A549 (cell line): ENCODE measurements at regions of chrX and their contacts with region 1.

Region 1: DNA sequence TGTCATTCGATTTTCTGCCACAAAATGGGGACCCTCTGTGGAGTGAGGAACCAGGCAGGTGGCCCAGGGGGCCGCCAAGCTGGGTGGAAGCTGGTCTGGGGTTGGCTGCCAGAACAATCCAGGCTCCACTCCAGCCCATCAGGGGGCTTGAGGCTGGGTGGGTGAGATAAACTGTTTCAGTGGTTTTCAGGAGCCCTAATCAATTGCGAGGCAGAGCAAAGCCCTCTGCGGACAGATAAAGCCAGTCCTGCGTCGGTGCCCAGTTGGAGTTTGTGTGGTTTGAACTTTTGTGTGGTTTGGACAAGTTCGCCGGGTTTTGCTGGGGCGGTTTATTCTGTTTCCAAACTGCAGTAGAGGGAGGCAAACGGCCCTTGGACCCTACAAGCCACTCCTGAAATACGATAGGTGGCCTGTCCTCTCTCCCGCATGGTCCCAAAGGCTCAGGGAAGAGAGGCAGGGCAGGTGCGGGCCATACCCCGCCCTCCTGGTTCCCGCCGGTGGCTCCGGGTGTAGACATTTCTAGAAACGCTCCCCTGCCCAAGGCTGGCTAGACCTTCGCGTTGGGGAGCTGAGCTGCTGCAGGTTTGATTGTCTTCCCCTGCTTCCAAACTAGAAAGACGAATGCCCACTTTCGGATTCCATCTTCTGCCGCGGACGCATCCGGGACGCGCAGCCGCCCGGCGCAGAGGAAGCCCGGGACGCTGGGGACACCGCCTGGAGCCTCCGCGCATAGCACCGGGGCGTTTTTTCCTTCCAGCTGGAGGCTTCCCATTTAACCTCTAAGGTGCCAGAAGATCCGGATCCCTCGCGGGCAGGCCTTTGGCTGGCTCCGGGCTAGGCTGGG is 169.0 kb upstream of the BCOR start:
- DNase-seq: peak; percentile 65 to 73
- ATAC-seq: peak; percentile 95 to 97
- H3K4me3 ChIP-seq: peak overlapping the region; percentile 64
- H3K27ac ChIP-seq: peak overlapping the region; percentile 89 to 96
- H3K4me1 ChIP-seq: peaks cover 16% of the 10 kb centered on the region
- CTCF ChIP-seq: peak; percentile 67
- EP300 ChIP-seq: no peak
- POLR2A ChIP-seq: no peak
- RAD21 ChIP-seq: peak; percentile 79 to 90

Region 2: GRCh38 chrX:39730662-39731397 is 535.9 kb before region 1 on chrX:
- CTCF ChIA-PET with region 1: interaction called, 10 read pairs
- POLR2A ChIA-PET with region 1: interaction called, 3 read pairs
- DNase-seq: peak; percentile 72 to 82
- ATAC-seq: peak; percentile 79 to 93
- H3K4me3 ChIP-seq: no peak overlapping the region
- H3K27ac ChIP-seq: peak overlapping the region; percentile 77 to 78
- H3K4me1 ChIP-seq: peaks cover 48% of the 10 kb centered on the region
- CTCF ChIP-seq: peak; percentile 69
- EP300 ChIP-seq: no peak
- POLR2A ChIP-seq: no peak
- RAD21 ChIP-seq: peak; percentile 93

Region 3: DNA sequence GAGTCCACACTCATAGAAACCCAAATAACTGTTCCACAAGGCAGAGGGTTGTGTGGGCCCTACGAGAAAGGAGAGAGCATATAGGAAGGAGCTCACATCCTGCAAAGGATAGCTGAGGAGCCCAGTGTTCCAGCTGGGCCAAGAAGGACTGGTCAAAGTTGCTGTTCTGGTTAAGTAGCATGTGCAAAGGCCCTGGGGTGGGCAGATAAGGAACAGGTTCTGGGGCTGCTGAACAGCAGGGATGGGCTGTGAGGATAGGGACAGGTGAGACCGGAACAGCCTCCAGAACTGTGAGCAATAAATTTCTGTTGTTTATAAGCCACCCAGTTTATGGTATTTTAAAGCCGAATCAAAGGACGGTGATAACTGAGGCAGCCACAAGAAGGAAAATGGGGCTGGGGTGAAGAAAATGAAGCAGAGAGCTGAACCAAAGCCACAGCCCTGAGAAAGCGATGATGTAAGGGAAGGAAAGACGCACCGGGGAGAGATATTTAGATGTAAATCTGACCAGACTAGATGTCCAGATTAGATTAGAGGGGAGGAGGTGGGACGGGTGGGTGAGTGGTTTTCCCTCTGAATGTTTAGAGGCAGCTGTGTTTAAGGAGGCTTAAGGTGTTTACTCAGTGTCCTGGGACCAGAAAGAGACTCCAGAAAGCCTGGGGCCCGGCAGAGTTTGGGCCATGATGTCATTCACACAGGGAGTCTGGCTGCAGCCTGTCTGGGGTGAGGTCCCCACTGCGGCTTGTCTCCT is 11.8 kb after region 1 on chrX:
- CTCF ChIA-PET with region 1: interaction called, 17 read pairs
- POLR2A ChIA-PET with region 1: no interaction called
- DNase-seq: peak in 1 of 2 experiments; percentile 14
- ATAC-seq: no peak
- H3K4me3 ChIP-seq: no peak overlapping the region
- H3K27ac ChIP-seq: no peak overlapping the region
- H3K4me1 ChIP-seq: no peaks in the 10 kb centered on the region
- CTCF ChIP-seq: no peak
- EP300 ChIP-seq: no peak
- POLR2A ChIP-seq: no peak
- RAD21 ChIP-seq: no peak

Region 4: GRCh38 chrX:40326186-40326965 is 59.7 kb after region 1 on chrX:
- CTCF ChIA-PET with region 1: no interaction called
- POLR2A ChIA-PET with region 1: no interaction called
- DNase-seq: peak in 1 of 2 experiments; percentile 7
- ATAC-seq: no peak
- H3K4me3 ChIP-seq: no peak overlapping the region
- H3K27ac ChIP-seq: no peak overlapping the region
- H3K4me1 ChIP-seq: no peaks in the 10 kb centered on the region
- CTCF ChIP-seq: no peak
- EP300 ChIP-seq: no peak
- POLR2A ChIP-seq: no peak
- RAD21 ChIP-seq: no peak

Region 5: GRCh38 chrX:40420899-40421729 is 154.4 kb after region 1 on chrX:
- CTCF ChIA-PET with region 1: no interaction called
- POLR2A ChIA-PET with region 1: no interaction called
- DNase-seq: peak in 1 of 2 experiments; percentile 3
- ATAC-seq: no peak
- H3K4me3 ChIP-seq: no peak overlapping the region
- H3K27ac ChIP-seq: no peak overlapping the region
- H3K4me1 ChIP-seq: no peaks in the 10 kb centered on the region
- CTCF ChIP-seq: no peak
- EP300 ChIP-seq: no peak
- POLR2A ChIP-seq: no peak
- RAD21 ChIP-seq: no peak